ENCODE measurements at regions of chr1 and their contacts with region 1.

Region 1: GRCh38 chr1:212455803-212456528 is 23.2 kb downstream of the NENF start:
- DNase-seq: peak; percentile 77
- H3K4me3 ChIP-seq: no peak overlapping the region
- H3K27ac ChIP-seq: no peak overlapping the region
- H3K4me1 ChIP-seq: peaks cover 6% of the 10 kb centered on the region
- CTCF ChIP-seq: peak; percentile 99

Region 2: GRCh38 chr1:211680752-211681327 is 775.1 kb before region 1 on chr1:
- CTCF ChIA-PET with region 1: interaction called, 3 read pairs
- POLR2A ChIA-PET with region 1: interaction called, 3 read pairs
- intact Hi-C with region 1: loop called (anchors 2 kb)
- DNase-seq: peak; percentile 94
- H3K4me3 ChIP-seq: no peak overlapping the region
- H3K27ac ChIP-seq: peak overlapping the region; percentile 56
- H3K4me1 ChIP-seq: peaks cover 56% of the 10 kb centered on the region
- CTCF ChIP-seq: peak; percentile 89

Region 3: GRCh38 chr1:212062832-212063438 is 393.0 kb before region 1 on chr1:
- CTCF ChIA-PET with region 1: interaction called, 3 read pairs
- POLR2A ChIA-PET with region 1: interaction called, 3 read pairs
- intact Hi-C with region 1: loop called (anchors 2 kb)
- DNase-seq: peak; percentile 60
- H3K4me3 ChIP-seq: no peak overlapping the region
- H3K27ac ChIP-seq: no peak overlapping the region
- H3K4me1 ChIP-seq: no peaks in the 10 kb centered on the region
- CTCF ChIP-seq: peak; percentile 88

Region 4: GRCh38 chr1:212368073-212368484 is 87.9 kb before region 1 on chr1:
- CTCF ChIA-PET with region 1: interaction called, 9 read pairs
- POLR2A ChIA-PET with region 1: interaction called, 3 read pairs
- intact Hi-C with region 1: loop called (anchors 2 kb)
- DNase-seq: peak; percentile 76
- H3K4me3 ChIP-seq: no peak overlapping the region
- H3K27ac ChIP-seq: no peak overlapping the region
- H3K4me1 ChIP-seq: no peaks in the 10 kb centered on the region
- CTCF ChIP-seq: peak; percentile 94

Region 5: GRCh38 chr1:212485895-212486590 is 30.1 kb after region 1 on chr1:
- CTCF ChIA-PET with region 1: no interaction called
- POLR2A ChIA-PET with region 1: no interaction called
- intact Hi-C with region 1: no loop called
- DNase-seq: no peak
- H3K4me3 ChIP-seq: no peak overlapping the region
- H3K27ac ChIP-seq: no peak overlapping the region
- H3K4me1 ChIP-seq: no peaks in the 10 kb centered on the region
- CTCF ChIP-seq: no peak

Region 6: DNA sequence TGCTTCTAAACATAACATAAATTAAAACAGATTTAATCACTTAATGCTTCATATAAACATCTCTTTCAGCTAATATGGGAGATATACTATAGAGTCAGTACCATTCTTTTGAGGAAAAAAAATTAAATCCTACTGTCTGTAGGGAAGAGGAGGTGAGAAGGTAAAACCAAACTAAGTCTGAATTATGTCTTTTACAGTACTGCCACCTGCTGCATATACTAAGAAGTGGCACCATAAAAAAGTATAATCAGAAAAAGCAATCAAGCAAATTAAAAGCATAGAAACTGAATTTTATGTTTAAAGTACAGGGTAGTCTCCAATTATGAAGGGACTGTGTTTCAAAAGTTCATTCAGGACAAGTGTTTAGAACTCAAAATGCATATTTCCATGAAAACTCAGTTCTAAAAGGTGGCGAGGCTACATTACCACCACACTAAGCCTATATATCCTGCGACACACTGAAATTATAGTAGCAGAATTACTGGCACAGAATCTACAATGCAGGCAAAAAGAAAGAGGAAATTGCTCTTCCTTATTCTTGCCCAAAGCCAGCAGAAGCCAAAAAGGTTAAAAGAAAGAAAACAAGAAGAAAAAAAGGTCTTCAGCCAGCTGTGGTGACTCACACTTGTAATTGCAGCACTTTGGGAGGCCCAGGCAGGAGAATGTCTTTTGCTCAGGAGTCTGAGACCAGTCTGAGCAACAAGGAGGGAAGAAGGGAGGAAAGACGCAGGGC is 326.6 kb after region 1 on chr1:
- CTCF ChIA-PET with region 1: no interaction called
- POLR2A ChIA-PET with region 1: no interaction called
- intact Hi-C with region 1: loop called (anchors 5 kb)
- DNase-seq: peak; percentile 42
- H3K4me3 ChIP-seq: no peak overlapping the region
- H3K27ac ChIP-seq: no peak overlapping the region
- H3K4me1 ChIP-seq: no peaks in the 10 kb centered on the region
- CTCF ChIP-seq: peak; percentile 89

Measured in OCI-LY7 (cell line).